H1 (cell line): ENCODE measurements at regions of chr15 and their contacts with region 1.

Region 1: DNA sequence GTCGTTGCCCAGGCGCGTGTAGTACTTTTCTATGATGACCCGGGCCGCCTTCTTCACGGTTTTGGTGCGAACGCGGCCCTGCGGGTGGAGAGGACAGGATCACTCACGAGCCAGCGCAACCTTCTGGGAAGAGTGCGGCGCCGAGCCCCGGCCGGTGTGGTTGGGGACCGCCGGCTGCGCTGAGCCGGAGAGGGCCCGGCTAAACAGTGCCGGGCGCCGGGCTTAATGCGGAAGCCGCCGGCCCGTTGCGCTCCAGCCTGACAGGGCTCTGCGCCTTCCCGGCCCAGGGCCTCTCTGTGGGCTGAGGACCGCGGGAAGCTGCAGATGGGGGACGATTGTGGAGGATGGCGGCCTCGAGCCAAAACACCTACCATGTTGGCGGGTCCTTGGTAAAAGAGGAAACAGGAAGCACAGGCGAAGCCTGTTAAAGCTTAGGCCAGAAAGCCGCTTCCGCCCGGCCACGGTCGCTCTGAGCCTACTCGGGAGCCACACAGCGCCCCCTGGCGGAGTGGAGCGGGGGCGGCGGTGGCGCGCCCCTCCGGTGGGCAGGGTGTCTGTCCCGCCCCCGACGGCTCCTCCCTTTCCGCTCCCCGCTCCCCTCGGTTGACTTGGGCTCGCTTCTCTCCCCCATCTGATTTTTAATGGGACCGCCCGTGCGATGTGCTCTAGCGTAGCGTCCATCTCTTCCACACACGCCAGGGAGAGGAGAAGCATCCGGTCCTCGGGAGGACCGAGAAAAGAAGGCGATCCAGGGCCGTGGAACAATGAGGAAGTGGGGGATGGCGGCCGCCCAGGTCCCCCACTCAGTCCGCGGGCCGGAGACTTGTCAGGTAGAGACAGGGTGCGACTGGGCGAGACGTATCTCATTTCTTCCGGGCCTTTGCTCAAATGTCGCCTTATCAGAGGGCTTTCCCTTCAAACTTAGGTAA is at the start of gene RPS17:
- DNase-seq: peak; percentile 91 to 99
- H3K4me3 ChIP-seq: peak within 1 kb of the TSS; percentile 96 to 100 (median 98)
- H3K27ac ChIP-seq: peak within 1 kb of the TSS; percentile 90
- H3K4me1 ChIP-seq: peaks cover 5 to 24% (median 13%) of the 10 kb centered on the region in 4 experiments; a peak in 6 of 7 replicates
- H3K27me3 ChIP-seq: no peaks in the 10 kb centered on the region
- CTCF ChIP-seq: peak; percentile 85 to 98 (median 91)
- EP300 ChIP-seq: peak in 1 of 2 experiments; percentile 99; a peak in 2 of 3 replicates
- POLR2A ChIP-seq: peak; percentile 96 to 99
- RAD21 ChIP-seq: peak; percentile 17 to 50; a peak in 2 of 4 replicates
- total RNA-seq, gene RPS17: 2,416 and 2,501 TPM in 2 replicates

Region 2: DNA sequence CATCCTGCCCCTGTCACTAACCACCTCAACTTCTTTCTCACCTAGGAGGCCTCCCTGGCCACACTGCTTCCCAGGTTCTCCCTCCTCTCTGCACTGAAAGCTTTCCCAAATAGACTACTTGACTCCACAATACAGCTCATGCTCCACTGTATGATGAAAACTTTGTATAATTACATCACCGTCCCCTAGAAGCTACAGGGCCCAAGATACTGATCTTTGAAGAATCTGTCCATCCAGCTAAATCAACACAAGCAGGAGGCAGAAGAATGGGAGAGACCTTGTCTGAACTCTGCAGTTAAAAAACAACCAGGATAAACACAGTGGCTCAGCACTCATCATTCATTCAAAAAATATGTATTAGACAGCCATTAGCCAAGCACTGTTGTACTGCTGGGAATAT is 26.4 kb after region 1 on chr15:
- CTCF ChIA-PET with region 1: interaction called, 5 read pairs
- POLR2A ChIA-PET with region 1: interaction called, 95 read pairs
- DNase-seq: no peak
- H3K4me3 ChIP-seq: no peak overlapping the region
- H3K27ac ChIP-seq: no peak overlapping the region
- H3K4me1 ChIP-seq: peaks cover 8 to 11% (median 9%) of the 10 kb centered on the region in 4 experiments
- H3K27me3 ChIP-seq: no peaks in the 10 kb centered on the region
- CTCF ChIP-seq: no peak
- EP300 ChIP-seq: no peak
- POLR2A ChIP-seq: no peak
- RAD21 ChIP-seq: no peak

Region 3: GRCh38 chr15:82585072-82585471 is 44.8 kb after region 1 on chr15:
- CTCF ChIA-PET with region 1: interaction called, 3 read pairs
- POLR2A ChIA-PET with region 1: interaction called, 12 read pairs
- DNase-seq: no peak
- H3K4me3 ChIP-seq: no peak overlapping the region; a peak in 1 of 8 replicates
- H3K27ac ChIP-seq: no peak overlapping the region
- H3K4me1 ChIP-seq: peaks cover 0 to 9% (median 5%) of the 10 kb centered on the region in 4 experiments; a peak in 4 of 7 replicates
- H3K27me3 ChIP-seq: no peaks in the 10 kb centered on the region; a peak in 1 of 7 replicates
- CTCF ChIP-seq: peak in 1 of 3 experiments; percentile 41; a peak in 1 of 4 replicates
- EP300 ChIP-seq: no peak
- POLR2A ChIP-seq: no peak
- RAD21 ChIP-seq: peak; percentile 58 to 65

Region 4: GRCh38 chr15:82680200-82681102 is 140.1 kb after region 1 on chr15:
- CTCF ChIA-PET with region 1: interaction called, 3 read pairs
- POLR2A ChIA-PET with region 1: interaction called, 15 read pairs
- DNase-seq: peak; percentile 82 to 88
- H3K4me3 ChIP-seq: peak overlapping the region; percentile 61 to 76 (median 71)
- H3K27ac ChIP-seq: peak overlapping the region; percentile 76
- H3K4me1 ChIP-seq: peaks cover 0 to 8% (median 3%) of the 10 kb centered on the region in 4 experiments; a peak in 4 of 7 replicates
- H3K27me3 ChIP-seq: peaks cover 0 to 10% (median 3%) of the 10 kb centered on the region in 4 experiments; a peak in 4 of 7 replicates
- CTCF ChIP-seq: peak; percentile 52 to 65 (median 55)
- EP300 ChIP-seq: no peak
- POLR2A ChIP-seq: peak; percentile 87 to 88
- RAD21 ChIP-seq: peak; percentile 65 to 70